ENCODE measurements at regions of chr6 and their contacts with region 1.

Region 1: DNA sequence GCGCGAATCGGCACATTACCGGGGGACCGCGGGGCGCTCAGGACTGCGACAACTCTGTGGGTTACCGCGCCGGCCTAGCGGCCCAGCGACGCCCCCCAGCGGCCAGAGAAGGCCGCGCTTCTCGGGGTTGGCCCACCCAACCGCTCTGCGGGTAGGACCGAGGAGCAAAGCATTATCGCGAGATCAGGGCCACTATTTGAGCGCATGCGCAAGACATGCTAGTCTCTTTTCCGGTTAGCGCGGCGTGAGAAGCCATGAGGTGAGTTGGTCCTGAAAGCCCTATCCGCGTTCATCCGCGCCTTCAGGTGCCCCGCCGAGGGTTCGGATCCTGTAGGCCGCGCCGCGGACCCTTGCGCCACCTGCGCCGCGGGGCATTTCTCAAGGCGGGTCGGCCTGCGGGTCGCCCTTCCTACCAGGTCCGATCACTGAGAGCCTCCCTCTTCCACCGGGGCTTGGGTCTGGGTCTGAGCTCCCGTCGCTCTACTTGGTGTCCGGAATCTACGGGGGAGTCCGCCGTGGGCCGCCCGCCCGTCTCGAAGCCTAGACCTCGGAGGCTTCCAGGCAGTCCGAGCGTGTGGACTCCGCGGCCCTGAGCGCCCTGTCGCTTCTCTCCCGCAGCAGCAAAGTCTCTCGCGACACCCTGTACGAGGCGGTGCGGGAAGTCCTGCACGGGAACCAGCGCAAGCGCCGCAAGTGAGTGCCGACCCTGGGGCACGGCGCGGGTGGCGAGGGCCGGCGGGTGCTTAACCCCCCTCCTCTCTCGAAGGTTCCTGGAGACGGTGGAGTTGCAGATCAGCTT is at the start of gene RPL10A:
- DNase-seq: peak; percentile 93 to 99 (median 96)

Region 2: GRCh38 chr6:34901930-34902329 is 566.5 kb before region 1 on chr6:
- intact Hi-C with region 1: no loop called
- DNase-seq: no peak

Region 3: GRCh38 chr6:35259194-35259947 is 209.0 kb before region 1 on chr6 and contains the start of gene ZNF76:
- intact Hi-C with region 1: loop called (anchors 2 kb)
- DNase-seq: peak; percentile 95 to 100 (median 97)

Region 4: GRCh38 chr6:35330541-35331119 is 137.8 kb before region 1 on chr6:
- intact Hi-C with region 1: no loop called
- DNase-seq: no peak

Region 5: DNA sequence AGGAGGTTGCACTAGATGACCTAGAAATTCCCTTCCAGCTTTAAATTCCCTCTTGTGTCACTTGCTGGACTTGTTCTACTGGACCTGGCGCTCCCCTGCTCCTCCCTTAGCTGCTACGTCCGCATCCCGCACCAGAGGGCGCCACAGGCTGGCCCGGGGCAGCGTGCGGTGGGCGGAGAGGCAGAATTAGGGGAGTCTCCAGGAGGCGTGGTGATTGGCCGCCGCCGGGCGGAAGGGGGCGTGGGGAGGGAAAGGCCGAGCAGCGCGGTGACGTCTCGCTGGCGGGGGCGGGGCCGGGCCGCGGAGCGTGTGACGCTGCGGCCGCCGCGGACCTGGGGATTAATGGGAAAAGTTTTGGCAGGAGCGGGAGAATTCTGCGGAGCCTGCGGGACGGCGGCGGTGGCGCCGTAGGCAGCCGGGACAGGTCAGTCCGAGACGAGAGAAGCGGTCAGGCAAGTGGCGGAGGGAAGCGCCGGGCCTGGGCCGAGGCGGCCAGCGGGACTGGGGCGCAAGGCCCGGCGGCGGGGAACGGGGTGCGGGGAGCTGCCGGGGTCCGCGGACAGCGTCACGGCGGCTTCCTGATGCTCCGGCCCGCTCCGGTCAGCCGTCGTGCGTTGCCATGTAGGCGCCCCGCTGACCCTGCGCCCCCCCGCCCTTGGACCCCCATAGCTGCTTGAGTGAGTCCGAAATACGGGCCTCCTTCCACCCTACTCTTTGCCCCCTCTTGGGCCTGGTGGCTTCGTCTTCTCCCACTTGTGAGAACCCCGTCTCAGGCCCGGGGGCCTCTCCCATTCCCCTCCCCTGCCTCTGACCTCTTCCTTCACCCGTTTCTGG is 125.9 kb before region 1 on chr6 and contains the start of gene PPARD:
- intact Hi-C with region 1: loop called (anchors 1 kb)
- DNase-seq: peak; percentile 97 to 100 (median 99)

Region 6: GRCh38 chr6:35415065-35415991 is 53.1 kb before region 1 on chr6:
- intact Hi-C with region 1: loop called (anchors 5 kb)
- DNase-seq: peak; percentile 73 to 98 (median 87)

Region 7: GRCh38 chr6:35500782-35501181 is 32.4 kb after region 1 on chr6:
- intact Hi-C with region 1: no loop called
- DNase-seq: no peak

Region 8: DNA sequence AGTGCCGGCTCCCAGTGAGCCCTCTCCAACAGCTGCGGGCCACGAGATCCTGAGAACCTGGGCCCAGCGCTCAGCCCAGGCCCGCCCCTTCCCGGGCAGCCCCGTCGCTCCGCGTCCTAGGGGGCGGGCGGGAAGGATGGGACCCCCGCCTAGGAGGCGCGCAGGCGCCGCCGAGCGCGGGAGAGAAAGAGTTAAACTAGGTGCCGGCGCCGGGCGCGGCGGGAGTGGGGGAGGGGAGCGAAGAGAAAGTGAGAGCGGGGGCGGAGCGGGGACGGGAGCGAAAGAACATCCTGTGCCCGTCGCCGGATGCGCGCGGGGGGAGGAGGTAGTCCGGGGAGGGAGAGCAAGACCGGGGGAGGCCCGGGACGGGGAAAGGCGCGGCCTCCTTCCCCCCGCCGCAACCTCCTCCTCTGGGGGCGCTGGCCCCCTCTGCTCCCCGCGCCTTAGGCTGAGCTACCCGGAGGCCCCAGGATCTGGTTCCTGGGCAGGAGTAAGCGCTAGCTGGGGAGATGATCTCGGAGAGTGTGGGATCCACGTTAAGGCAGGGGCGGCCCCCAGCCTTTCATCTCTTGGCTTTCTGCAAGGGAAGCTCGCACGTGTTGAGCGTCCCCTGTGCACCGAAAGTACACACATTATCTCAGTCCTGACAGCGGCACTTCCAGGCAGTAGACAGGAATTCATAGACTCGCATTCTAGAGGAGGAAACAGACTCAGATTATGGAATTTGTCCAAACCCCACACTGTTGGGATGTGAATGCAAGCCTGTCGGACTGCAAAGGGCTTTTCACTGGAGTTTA is 263.6 kb after region 1 on chr6:
- intact Hi-C with region 1: loop called (anchors 2 kb)
- DNase-seq: peak; percentile 78 to 97 (median 88)